ENCODE measurements at regions of chr7 and their contacts with region 1.

Region 1: GRCh38 chr7:92447345-92448204 is at the start of gene GATAD1:
- DNase-seq: peak; percentile 79 to 97 (median 94)

Region 2: DNA sequence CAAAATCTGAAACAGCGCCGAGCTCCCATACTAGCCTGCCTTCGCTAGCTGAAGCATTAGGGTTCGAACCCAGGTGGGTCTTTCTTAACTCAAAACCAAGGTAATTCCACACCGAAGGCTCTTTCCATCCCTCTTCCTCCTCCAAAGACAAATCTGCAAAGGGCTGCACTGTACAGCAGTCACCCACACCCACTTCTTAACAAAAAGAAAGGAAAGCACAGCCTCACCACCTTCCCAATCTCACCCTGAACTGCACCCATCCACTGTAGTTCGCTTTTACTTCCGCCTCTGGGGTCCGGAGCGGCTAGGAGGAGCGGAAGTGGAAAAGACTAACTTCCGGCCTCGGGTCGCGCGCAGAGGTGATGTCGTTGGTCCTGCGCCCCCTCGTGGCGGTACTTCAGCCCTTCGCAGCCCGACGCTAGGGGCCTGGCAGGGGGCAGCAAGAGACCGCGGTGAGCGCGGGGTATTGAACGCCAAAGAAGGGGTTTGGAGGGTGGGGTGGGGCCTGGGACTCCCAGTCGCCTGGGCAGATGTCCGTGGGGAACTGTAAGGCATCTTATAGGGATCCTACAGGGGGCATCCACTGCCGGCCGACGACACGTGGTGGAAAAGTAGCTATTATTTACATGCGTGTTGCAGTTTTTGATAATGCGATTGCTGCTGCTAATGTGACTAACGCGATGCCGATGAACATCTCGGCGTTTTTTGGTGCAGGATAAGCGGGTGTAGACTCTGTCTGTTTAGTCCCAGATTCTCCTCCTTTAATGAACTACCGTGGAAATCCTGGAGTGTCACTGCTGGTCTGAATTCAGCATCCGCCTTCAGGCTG is 566.9 kb before region 1 on chr7 and contains the start of gene MTERF1:
- intact Hi-C with region 1: loop called (anchors 5 kb)
- DNase-seq: peak; percentile 84 to 98 (median 95)

Region 3: DNA sequence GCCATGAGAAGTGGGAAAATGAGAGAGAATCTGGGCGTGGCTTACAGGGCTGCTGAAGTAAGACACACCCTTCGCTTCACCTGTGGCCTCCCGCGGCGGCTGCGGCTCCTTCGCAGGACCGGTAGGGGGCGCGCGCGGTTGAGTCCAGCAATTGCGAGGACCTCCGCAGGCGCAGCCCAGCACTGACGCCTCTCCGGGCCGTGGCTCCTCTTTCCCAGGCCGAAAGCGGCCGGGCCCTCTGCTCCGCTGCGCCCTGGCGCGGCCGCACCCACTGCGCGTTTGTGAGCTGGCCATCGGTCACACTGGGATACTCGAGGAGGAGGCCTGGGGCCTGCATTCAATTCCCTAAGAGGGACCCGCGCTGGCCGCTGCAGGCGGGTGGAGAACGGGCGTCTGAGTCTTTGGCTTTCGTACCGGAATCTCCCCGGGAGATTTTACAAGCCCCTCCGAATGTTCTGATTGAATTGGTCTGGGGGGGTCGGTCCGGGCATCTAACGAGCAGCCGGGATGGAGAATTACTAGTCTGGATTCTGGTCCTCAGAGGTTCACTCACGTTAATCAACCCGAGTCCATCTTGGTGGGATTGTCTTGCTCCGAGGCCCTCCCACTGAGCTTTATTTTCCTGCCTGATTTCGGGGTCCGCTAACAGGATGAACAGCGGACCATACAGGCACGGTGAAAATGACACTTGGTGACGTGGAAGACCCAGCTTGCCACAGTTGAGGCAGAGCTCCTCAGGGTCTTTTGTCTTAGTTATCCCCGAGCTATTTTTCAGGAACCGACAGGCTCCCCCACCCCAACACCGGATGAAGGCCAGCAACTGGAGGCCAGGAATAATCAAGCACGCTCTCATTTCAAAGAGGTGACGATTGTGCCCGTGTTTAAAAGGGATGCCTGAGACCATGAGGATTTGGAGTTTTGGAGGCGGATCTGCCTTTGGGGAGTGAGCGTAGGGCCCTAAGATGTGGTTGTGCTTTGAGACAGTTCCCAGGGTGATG is 268.3 kb before region 1 on chr7 and contains the start of gene LRRD1:
- intact Hi-C with region 1: loop called (anchors 5 kb)
- DNase-seq: peak; percentile 78 to 97 (median 91)

Region 4: GRCh38 chr7:92763636-92764423 is 316.3 kb after region 1 on chr7:
- intact Hi-C with region 1: no loop called
- DNase-seq: peak in 24 of 42 donors; percentile 15 to 77 (median 47)

Measured in head of caudate nucleus (tissue), 42 donors.